ENCODE measurements at regions of chr9 and their contacts with region 1.

Region 1: DNA sequence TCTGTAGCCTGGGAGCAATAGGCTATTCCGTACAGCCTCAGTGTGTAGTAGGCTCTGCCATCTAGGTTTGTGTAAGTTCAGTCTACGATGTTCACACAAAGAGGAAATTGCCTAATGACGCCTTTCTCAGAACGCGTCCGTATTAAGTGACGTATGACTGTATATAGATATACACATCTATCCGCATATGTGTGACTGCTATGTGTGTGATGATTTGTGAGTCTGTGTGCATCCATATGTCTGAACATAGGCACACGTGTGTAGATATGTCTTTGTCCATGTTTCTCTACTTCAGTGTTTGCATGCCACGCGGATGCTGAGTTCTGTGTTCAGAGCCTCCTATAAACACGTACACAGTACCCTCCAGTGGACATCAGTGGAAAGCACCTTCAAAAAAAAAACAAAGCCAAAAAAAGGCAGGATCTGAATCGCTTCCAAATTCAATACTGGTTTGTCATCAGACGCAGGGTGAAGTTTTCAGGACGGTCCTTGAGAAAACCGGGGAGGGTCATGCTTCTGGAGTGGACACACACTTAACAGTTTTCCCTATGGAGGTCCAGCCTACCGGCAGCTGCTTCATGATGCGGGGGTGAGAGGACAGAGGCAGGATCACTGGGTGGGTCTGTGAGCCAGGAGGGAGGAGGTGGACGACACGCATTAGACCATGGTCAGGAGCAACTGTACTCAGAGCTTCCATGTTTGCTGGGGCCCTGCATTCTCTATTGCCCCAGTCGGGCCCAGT is 29.5 kb upstream of the ALDH1B1 start:
- DNase-seq: peak; percentile 46
- ATAC-seq: peak; percentile 83 to 88

Region 2: DNA sequence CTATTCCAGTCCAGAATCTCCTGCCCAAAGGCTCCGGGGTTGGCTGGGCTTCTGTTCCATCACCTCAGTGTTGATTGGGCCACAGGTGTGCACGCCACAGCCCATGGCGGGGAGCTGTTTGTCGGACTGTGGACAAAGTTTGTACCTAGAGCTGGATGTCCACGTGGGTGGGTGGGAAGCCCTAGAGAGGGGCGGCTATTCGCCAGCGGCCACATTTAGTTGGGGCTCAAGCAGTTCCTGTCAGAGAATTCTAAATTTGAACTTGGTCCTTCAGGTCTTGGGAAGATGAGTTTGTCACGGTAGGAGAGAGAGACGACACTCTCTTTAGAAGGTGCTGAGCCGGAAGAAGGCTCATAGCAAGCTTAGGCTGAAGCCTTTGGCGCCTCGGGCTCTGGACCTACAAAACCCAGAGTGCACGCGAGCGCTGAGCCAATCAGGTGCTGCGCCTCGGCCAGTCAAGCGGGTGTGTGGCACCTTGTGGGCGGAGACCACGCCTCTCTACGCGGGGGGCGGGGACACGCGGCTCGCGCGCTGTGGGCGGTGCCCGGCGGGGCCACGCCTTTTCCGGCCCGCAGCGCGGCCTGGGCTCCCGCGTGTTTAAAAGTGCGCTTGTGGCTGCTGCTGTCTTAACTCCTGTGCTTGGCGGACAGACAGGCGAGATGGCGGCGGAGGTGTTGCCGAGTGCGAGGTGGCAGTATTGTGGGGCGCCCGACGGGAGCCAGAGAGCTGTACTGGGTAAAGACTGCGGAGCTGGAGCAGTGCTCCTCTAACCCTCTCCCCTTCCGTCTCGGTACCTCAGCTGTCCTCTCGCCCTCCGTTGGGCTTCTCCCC is 877.4 kb before region 1 on chr9 and contains the start of gene POLR1E:
- intact Hi-C with region 1: loop called in 1 of 2 experiments (anchors 10 kb)
- DNase-seq: peak; percentile 97
- ATAC-seq: peak; percentile 98
- total RNA-seq, gene POLR1E: 12.5 to 17.2 TPM

Region 3: DNA sequence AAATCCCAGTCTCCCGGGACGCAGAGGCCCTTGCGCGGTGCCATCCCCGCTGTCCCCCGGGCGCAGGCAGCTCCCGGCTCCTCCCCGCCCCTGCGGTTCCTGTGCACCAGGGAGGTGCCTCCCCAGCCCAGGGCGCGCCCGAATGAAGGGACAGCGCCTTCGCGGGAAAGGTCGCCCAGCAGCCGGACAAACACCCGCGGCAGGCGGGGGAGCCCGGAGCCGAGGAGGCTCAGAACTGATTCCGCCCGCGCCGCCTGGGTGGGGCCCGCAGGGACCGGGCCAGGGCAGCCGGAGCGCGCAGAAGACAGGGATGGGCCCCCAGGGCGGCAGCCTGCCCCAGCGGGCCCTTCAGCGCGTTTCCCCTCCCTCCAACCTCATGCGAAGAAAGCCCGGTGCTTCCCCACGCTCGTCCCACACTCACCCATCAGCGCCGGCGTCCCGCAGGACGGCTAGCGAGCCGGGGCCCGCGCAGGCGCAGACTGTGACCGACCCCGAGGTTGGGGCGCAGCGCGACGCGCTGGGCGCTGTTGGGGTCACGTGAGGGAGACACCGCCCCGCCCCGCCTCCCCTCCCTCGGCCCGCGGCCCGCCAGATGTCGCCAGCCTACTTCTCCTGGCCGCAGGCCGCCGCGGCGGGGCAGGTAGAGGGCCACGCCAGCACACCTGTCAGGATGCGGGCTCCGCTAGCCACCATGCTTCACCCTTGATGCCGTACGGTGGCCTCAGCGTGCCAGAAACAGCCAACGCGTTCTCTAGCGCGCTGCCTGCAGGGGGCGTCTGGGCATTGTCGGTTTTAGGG is 459.2 kb before region 1 on chr9 and contains the start of gene SLC25A51:
- intact Hi-C with region 1: loop called in 1 of 2 experiments (anchors 10 kb)
- DNase-seq: peak; percentile 93
- ATAC-seq: peak; percentile 92 to 96
- total RNA-seq, gene SLC25A51: 30.2 to 30.3 TPM

Region 4: GRCh38 chr9:38088006-38088925 is 274.8 kb before region 1 on chr9:
- intact Hi-C with region 1: loop called in 1 of 2 experiments (anchors 5 kb)
- DNase-seq: peak; percentile 72
- ATAC-seq: peak; percentile 77 to 88

Region 5: GRCh38 chr9:38294220-38294960 is 68.6 kb before region 1 on chr9:
- intact Hi-C with region 1: loop called in 1 of 2 experiments (anchors 10 kb)
- DNase-seq: no peak
- ATAC-seq: peak in 1 of 2 donors; percentile 53

Measured in left cardiac atrium (tissue), 4 donors.